ENCODE measurements at regions of chr1 and their contacts with region 1.

Region 1: DNA sequence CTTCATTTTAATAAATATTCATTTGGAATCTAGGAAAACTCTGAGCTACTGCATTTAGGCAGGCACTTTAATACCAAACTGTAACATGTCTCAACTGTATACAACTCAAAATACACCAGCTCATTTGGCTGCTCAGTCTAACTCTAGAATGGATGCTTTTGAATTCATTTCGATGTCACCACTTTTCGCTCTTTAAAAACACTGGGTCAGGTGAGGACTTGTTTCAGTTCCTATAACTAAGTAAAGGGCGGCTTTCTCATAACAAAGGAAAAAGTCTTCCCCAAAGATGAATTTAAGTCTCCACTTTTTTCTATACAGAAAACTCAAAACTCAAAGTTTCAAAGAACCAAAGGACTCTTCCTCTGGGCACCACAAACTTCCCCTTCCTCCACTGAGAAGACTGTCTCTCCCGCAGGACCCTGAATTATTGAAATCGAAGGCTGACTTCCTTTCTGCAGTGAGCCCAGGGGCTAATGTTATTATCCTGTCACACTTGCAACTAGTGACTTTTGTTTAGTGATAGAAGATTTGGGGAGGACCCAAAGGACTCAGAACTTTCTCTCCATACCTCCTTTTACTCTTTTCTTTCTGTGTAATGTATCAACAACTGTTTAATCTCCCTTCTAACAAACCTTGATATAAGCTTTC is 9.7 kb upstream of the DHX9 start:
- DNase-seq: no peak
- ATAC-seq: no peak
- H3K4me3 ChIP-seq: no peak overlapping the region
- H3K27ac ChIP-seq: no peak overlapping the region
- H3K4me1 ChIP-seq: no peaks in the 10 kb centered on the region
- H3K27me3 ChIP-seq: no peaks in the 10 kb centered on the region
- CTCF ChIP-seq: no peak
- POLR2A ChIP-seq: no peak

Region 2: DNA sequence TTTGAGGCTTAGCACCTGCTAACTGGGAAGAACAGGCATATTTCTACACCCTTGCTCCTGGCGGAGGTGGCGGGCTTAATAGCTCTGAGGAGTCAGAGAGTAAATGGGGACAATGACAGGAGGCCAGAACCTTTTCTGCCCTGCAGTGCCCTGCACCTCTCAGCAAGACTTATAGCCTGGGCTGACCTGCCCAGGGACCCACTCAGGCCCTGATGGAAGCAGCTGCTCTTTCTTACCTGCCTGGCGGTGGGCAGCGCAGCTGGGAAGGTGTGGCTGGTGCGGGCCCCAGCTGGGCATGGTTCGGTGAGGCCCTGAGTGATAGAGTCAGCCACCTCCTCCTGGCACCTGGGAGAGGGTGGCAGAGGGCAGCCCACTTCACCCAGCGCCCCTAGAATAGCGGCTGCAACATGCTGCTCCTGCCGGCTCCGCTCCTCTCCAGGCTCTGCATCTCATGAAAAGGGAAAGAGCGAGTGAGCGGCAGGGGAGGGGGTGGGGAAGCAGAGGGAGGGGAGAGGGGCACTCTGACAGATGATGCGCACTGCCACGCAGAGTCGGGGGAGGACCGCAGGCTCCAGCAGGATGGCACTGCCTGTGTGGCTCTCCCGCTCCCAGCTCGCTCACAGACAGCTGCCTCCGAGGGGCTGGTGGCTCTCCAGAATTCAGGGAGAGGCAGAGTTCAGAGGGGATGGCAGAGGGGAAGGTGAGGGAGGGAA is 145.1 kb before region 1 on chr1 and contains the start of gene RGS8:
- in situ Hi-C with region 1: no loop called
- intact Hi-C with region 1: no loop called
- DNase-seq: no peak
- ATAC-seq: no peak
- H3K4me3 ChIP-seq: no peak within 1 kb of the TSS
- H3K27ac ChIP-seq: no peak within 1 kb of the TSS
- H3K4me1 ChIP-seq: no peaks in the 10 kb centered on the region
- H3K27me3 ChIP-seq: peaks cover 0 to 5% (median 0%) of the 10 kb centered on the region in 3 donors
- CTCF ChIP-seq: no peak
- POLR2A ChIP-seq: no peak
- total RNA-seq, gene RGS8: not detected

Region 3: DNA sequence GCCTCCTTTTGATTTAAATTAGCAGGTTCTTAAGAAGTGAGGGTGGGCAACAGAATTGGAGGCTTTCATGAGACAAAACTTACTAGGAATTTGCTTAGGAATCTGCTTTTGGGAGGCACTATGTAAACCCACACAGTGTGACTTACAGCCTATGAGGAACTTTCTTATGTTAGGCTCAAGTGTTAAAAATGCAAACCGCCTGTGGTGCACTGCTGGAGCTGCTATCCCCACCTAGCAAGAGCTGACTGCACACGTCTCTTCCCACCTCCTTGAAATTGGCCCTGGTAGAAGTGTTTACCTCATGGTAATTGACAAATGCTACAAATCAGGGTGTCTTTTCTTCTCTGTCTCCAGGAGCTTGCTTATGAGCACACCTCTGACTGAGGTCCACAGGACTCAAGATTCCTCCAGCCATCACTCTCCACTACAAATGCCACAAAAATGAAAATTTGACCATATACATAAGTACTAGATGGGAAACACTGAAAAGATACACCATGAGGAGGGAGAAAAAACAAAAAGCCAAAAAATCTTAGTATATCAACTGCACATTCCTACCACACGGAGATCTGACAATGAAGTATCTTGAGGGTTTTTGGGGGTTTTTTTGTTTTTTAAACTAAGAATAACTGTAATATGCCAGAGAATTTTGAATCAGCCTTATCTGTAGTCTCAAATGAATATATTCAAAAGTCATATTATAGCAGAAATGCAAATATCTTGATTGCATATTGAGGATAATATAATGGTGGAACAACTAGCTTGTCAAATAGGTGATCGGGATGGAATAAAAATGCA is 58.0 kb before region 1 on chr1:
- in situ Hi-C with region 1: no loop called
- intact Hi-C with region 1: no loop called
- DNase-seq: no peak
- ATAC-seq: no peak
- H3K4me3 ChIP-seq: no peak overlapping the region
- H3K27ac ChIP-seq: no peak overlapping the region
- H3K4me1 ChIP-seq: peaks cover 10 to 16% of the 10 kb centered on the region in 2 donors
- H3K27me3 ChIP-seq: no peaks in the 10 kb centered on the region
- CTCF ChIP-seq: no peak
- POLR2A ChIP-seq: no peak

Region 4: DNA sequence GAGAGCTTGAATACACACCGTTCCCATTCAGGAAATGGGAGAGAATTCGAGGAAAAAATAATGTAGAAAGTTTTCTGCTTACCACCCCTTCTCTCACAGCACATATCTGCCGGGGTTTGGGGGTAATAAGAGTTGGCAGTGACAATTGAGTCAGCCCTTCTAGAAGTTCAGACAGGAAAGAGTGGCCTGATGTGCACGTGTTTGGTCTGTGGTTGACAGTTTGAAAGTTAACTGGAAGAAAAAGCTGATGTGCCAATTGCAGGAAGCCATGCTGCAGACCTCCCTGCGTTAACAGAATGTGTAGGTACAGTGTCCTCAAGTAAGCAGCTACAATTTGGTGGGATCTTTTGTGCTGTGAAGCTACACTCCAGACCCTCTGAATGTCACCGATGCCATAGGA is 60.6 kb after region 1 on chr1:
- in situ Hi-C with region 1: loop called in 1 of 4 experiments (anchors 10 kb)
- intact Hi-C with region 1: no loop called
- DNase-seq: no peak
- ATAC-seq: no peak
- H3K4me3 ChIP-seq: no peak overlapping the region
- H3K27ac ChIP-seq: no peak overlapping the region
- H3K4me1 ChIP-seq: no peaks in the 10 kb centered on the region
- H3K27me3 ChIP-seq: no peaks in the 10 kb centered on the region
- CTCF ChIP-seq: no peak
- POLR2A ChIP-seq: no peak

Region 5: DNA sequence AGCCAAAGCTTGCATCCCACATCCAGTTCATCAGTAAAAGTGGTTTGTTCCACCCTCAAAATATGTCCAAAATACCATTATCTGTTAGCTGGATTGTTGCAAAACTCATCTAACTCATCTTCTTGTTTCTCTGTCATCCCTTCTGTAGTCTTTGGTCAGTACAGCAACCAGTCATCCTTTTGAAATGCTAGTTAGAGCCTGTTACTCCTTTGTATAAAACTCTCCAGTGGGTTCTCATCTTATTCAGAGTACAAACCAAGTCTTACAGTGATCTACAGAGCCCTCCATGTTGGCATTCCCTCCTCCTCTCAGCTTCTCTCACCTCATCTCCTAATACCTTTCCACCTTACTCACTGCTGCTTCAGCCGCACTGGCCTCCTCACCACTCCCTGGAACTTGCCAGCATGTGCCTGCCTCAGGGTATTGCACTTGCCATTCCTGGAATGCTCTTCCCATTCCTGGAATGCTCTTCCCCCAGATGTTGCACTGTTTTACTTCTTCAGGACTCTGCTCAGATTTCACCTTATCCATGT is 264.4 kb after region 1 on chr1:
- in situ Hi-C with region 1: no loop called
- intact Hi-C with region 1: no loop called
- DNase-seq: no peak
- ATAC-seq: no peak
- H3K4me3 ChIP-seq: no peak overlapping the region
- H3K27ac ChIP-seq: no peak overlapping the region
- H3K4me1 ChIP-seq: peaks cover 80 to 87% of the 10 kb centered on the region in 2 donors
- H3K27me3 ChIP-seq: no peaks in the 10 kb centered on the region
- CTCF ChIP-seq: no peak
- POLR2A ChIP-seq: no peak

Measured in gastrocnemius medialis (tissue), 4 donors.